ENCODE measurements at regions of chr4 and their contacts with region 1.

Region 1: DNA sequence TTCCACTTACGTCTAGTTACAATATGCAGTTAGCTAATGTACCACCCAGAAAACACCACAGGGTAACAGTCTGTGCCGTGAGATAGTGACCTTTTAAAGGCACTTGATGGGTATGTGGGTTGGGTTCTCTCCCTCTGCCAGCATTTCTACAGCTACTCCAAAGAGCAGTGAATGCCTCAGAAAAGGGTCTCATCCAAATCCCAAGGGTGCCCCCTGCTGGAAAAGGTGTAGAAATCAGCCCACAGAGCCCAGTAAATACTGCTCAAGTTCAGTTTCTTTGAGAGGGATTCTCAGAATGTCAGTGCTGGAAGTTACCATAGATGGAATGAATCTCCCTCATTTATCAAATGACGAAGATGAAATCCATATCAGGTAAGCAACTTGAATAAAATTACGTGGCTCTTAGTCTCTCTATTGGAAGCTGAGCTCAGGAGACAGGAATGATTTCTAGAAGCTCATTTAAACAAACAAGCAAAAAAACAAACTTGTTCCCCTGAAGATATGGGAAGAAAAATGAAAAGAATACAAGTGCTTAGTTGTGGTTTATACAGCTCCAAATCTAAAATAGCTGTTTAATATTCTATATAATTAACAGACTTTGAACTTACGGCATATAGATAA is 9.5 kb downstream of the RNF175 start:
- DNase-seq: peak in 1 of 2 donors; percentile 67
- ATAC-seq: peak; percentile 90
- H3K4me3 ChIP-seq: no peak overlapping the region
- H3K27ac ChIP-seq: no peak overlapping the region
- H3K4me1 ChIP-seq: peaks cover 0 to 3% of the 10 kb centered on the region in 2 donors
- H3K27me3 ChIP-seq: no peaks in the 10 kb centered on the region

Region 2: GRCh38 chr4:153142700-153143438 is 607.4 kb before region 1 on chr4:
- intact Hi-C with region 1: loop called in 1 of 2 experiments (anchors 10 kb)
- DNase-seq: peak; percentile 84 to 90
- ATAC-seq: peak; percentile 81
- H3K4me3 ChIP-seq: peak overlapping the region in 1 of 2 donors; percentile 11
- H3K27ac ChIP-seq: no peak overlapping the region
- H3K4me1 ChIP-seq: no peaks in the 10 kb centered on the region
- H3K27me3 ChIP-seq: no peaks in the 10 kb centered on the region

Region 3: GRCh38 chr4:153451911-153452657 is 298.2 kb before region 1 on chr4:
- intact Hi-C with region 1: loop called in 1 of 2 experiments (anchors 10 kb)
- DNase-seq: no peak
- ATAC-seq: no peak
- H3K4me3 ChIP-seq: no peak overlapping the region
- H3K27ac ChIP-seq: no peak overlapping the region
- H3K4me1 ChIP-seq: no peaks in the 10 kb centered on the region
- H3K27me3 ChIP-seq: no peaks in the 10 kb centered on the region

Region 4: GRCh38 chr4:153634738-153635353 is 115.5 kb before region 1 on chr4:
- intact Hi-C with region 1: loop called (anchors 2 kb)
- DNase-seq: no peak
- ATAC-seq: no peak
- H3K4me3 ChIP-seq: no peak overlapping the region
- H3K27ac ChIP-seq: no peak overlapping the region
- H3K4me1 ChIP-seq: no peaks in the 10 kb centered on the region
- H3K27me3 ChIP-seq: no peaks in the 10 kb centered on the region

Region 5: DNA sequence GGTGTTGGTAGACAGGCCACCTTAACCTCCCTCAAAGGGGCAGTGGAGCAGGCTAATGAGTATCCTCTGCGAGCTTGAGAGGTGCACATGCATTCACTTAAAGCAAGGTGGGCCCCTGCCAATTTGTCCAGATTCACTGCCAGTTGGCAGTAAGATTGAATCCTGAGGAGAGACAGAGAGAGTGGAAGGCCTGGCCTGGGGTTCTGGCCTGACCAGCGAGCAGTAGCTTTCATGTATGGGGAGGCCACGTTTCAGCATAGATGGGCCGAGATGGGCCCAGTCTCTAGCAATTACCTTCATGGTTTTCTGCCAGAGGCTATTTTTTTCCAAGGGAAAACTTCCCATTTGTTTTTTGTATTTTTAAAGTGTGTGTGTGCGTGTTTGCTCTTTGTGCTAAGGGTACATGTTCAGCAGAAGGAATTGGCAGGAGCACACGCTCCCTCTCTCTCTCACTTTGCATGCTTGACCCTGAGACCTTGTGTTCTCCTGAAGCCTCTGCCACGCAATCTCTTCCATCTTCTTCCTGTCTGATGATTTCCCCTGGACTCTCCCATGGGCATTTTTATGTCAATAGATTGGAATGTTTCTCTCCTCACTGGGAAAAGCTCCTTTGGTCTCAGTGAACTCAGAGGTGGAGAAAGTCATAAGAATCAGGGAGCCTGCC is 254.3 kb after region 1 on chr4:
- intact Hi-C with region 1: no loop called
- DNase-seq: no peak
- ATAC-seq: peak; percentile 71
- H3K4me3 ChIP-seq: no peak overlapping the region
- H3K27ac ChIP-seq: no peak overlapping the region
- H3K4me1 ChIP-seq: no peaks in the 10 kb centered on the region
- H3K27me3 ChIP-seq: no peaks in the 10 kb centered on the region

Measured in aorta (tissue), 5 donors.